ENCODE measurements at regions of chr11 and their contacts with region 1.

Region 1: DNA sequence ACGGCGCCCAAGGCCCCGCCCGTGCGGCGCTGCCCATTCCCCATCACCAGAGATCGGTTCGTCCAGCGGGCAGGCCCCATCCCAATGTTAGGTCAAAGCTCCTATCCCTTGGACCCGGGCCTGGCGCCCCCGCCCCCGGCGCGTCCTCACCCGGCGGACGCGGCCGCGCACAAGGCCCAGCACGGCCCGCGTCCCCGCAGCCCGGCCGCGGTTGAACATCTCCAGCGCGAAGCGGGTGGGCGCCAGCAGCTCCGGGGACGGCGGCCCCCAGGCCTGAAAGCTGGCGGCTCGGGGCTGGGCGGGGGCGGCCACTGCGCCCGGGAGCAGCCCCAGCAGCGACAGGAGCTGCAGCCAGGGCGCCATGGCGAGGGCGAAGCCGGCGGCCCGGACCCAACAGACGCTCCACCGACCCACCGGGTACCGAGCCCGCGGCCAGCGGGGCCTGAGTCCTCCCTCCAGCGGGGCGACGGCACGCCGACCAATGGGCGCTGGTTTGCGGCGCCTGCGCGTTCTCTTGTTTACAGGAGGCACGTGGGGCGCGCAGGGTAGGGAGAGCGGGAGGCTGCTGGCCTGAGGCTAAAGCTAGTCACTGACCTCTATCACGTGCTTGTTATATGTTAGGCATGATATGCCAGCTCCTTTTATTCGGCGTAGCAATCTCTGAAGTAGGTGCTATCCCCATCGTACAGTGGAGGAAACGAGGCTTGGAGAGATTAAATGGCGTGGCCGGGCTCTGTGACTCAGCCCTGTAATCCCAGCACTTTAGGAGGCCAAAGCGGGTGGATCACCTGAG is at the start of gene CTSF:
- DNase-seq: peak; percentile 100
- H3K4me3 ChIP-seq: peak within 1 kb of the TSS; percentile 58 to 59
- H3K27ac ChIP-seq: peak within 1 kb of the TSS in 1 of 2 experiments; percentile 23; a peak in 1 of 4 replicates
- H3K4me1 ChIP-seq: peaks cover 0 to 7% of the 10 kb centered on the region in 2 experiments; a peak in 1 of 4 replicates
- H3K27me3 ChIP-seq: no peaks in the 10 kb centered on the region
- CTCF ChIP-seq: no peak
- EP300 ChIP-seq: no peak
- RAD21 ChIP-seq: no peak
- polyA plus RNA-seq, gene CTSF: 57.2 and 60.1 TPM in 2 replicates

Region 2: DNA sequence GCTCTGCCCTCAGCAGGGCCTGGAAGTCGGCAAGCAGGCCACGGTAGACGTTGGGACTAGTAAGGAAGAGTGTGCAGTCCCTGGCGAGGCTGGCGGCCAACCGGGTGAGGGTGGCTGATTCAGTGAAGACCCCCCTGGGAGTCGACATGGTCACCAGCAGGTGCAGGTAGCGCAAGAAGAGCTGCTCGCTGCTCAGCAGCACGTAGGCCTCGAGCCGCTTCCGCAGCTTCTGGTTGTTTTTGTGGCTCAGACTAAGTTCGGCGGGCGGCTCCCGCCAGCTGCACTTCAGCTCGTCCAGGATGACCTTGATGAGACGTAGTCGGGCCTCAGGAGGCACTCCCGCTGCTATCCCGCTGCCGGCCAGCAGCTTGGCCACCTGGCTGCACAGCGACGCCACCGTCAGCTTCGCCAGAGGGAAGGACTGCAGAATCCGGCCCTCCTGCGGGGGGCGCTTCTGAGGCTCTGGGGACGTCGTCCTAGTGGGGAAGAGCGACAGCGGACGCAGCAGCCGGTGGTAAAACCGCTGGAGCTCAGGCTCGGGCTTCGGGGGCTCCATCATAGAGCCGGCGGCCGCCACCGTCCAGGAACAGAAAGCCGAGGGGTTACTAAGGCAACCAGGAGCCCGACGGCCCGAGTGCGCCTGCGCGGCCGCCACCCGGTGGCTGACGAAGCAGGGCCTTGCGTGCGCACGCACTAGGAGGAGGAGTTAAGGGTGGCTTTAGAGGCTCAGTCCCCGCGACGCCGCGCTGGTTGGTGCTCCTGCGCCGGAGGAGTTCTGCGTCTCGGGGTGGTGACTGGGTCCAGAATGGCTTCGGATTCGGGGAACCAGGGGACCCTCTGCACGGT is 24.4 kb after region 1 on chr11 and contains the starts of genes CCDC87 and CCS:
- CTCF ChIA-PET with region 1: interaction called, 14 read pairs
- POLR2A ChIA-PET with region 1: interaction called, 8 read pairs
- DNase-seq: peak; percentile 100
- H3K4me3 ChIP-seq: peak within 1 kb of the TSS; percentile 77 to 94
- H3K27ac ChIP-seq: peak within 1 kb of the TSS; percentile 62 to 84; a peak in 3 of 4 replicates
- H3K4me1 ChIP-seq: peaks cover 4 to 17% of the 10 kb centered on the region in 2 experiments; a peak in 1 of 4 replicates
- H3K27me3 ChIP-seq: no peaks in the 10 kb centered on the region
- CTCF ChIP-seq: peak; percentile 57
- EP300 ChIP-seq: no peak
- RAD21 ChIP-seq: no peak
- polyA plus RNA-seq, gene CCDC87: 0.06 and 0.21 TPM in 2 replicates
- polyA plus RNA-seq, gene CCS: 54.7 and 56.1 TPM in 2 replicates